ENCODE measurements at regions of chr11 and their contacts with region 1.

Region 1: DNA sequence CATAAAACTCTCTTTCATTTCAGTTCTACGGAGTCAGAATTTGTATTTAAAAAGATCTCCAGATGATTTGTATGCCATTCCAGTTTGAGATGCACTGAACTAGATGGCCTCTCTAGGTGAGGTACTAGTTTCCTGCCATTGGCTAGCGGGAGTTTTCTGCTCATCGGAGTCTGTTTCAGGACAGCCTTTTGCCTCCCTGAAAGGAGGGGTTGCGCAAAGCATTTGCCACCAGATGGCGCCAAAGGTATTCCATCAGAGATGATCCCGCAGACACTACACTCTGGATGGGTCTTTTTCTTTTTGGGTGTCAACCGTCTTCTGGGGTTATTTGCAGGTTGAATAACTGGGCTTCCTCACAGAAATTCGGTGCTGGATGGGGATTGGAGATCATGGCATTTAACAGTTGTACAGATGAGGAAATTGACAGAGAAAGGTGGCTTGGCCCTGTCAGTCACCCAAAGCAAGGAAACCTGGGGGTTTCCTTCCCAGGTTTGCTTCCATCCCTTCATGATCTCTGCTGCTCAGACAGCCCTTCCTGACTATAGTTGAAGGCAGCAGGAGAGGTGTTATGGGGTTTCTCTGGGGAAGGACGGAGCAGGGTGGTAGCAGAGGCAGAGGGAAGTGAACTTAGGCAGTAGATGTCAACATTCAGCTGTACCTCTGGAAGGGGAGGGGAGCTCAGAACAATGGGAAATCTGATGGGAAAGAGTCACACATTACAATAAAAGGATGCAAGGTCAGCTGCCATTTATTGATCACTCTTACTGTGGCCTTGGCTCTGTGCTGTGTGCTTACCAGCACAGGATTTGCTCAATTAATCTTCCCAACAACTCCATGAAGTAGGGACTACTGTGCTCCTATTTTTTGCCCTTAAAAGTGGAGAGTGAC is 81.6 kb downstream of the CCDC81 start:
- DNase-seq: peak; percentile 72
- H3K4me3 Mint-ChIP-seq: no peak overlapping the region
- H3K27ac Mint-ChIP-seq: no peak overlapping the region
- H3K4me1 Mint-ChIP-seq: peaks cover 39% of the 10 kb centered on the region
- H3K27me3 Mint-ChIP-seq: no peaks in the 10 kb centered on the region
- CTCF ChIP-seq: peak; percentile 84

Region 2: DNA sequence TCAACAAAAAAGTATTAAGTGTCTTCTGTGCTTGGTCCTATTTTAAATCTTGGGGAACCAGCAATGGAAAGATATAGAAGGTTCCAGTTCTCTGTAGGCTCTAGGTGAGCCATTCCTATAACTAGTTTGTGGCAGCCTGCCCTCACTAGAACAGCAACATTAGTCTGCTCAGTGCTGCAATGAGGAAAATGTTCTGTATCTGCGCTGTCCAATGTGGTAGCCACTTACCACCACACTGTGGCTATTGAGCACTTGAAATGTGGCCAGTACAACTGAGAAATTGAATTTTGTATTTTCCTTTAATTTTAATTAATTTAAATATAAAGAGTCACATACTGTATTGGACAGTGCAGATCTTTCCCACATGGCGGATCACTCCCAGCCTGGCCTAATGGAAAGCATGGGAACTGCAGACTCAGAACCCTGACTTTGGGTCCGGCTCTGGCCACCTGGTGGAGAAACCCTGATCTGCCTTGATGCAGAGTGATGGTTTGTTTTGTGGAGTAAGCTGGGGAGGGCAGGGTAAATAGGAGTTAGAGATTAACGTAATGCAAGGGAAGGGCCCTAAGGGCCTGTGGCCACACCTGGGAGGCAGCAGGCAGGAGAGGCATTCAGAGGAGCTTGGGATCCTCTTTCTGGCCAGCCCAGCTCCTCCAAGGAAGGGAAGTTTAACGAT is 115.1 kb after region 1 on chr11:
- CTCF ChIA-PET with region 1: no interaction called
- intact Hi-C with region 1: loop called (anchors 5 kb)
- DNase-seq: peak; percentile 22
- H3K4me3 Mint-ChIP-seq: peak overlapping the region; percentile 8
- H3K27ac Mint-ChIP-seq: no peak overlapping the region
- H3K4me1 Mint-ChIP-seq: peaks cover 63% of the 10 kb centered on the region
- H3K27me3 Mint-ChIP-seq: no peaks in the 10 kb centered on the region
- CTCF ChIP-seq: peak; percentile 59

Region 3: GRCh38 chr11:86608251-86608799 is 152.0 kb after region 1 on chr11:
- CTCF ChIA-PET with region 1: interaction called, 8 read pairs
- intact Hi-C with region 1: loop called (anchors 5 kb)
- DNase-seq: peak; percentile 52
- H3K4me3 Mint-ChIP-seq: no peak overlapping the region
- H3K27ac Mint-ChIP-seq: no peak overlapping the region
- H3K4me1 Mint-ChIP-seq: peaks cover 25% of the 10 kb centered on the region
- H3K27me3 Mint-ChIP-seq: no peaks in the 10 kb centered on the region
- CTCF ChIP-seq: no peak

Region 4: GRCh38 chr11:86919557-86920210 is 463.4 kb after region 1 on chr11:
- CTCF ChIA-PET with region 1: no interaction called
- intact Hi-C with region 1: loop called (anchors 2 kb)
- DNase-seq: no peak
- H3K4me3 Mint-ChIP-seq: no peak overlapping the region
- H3K27ac Mint-ChIP-seq: no peak overlapping the region
- H3K4me1 Mint-ChIP-seq: peaks cover 18% of the 10 kb centered on the region
- H3K27me3 Mint-ChIP-seq: no peaks in the 10 kb centered on the region
- CTCF ChIP-seq: peak; percentile 37